ENCODE measurements at regions of chr11 and their contacts with region 1.

Region 1: GRCh38 chr11:65219930-65220213 is 38.1 kb downstream of the CAPN1 start:
- DNase-seq: no peak
- H3K4me3 ChIP-seq: no peak overlapping the region
- H3K27ac ChIP-seq: no peak overlapping the region
- H3K4me1 ChIP-seq: peaks cover 0 to 9% (median 6%) of the 10 kb centered on the region in 4 experiments; a peak in 6 of 7 replicates
- H3K27me3 ChIP-seq: no peaks in the 10 kb centered on the region
- CTCF ChIP-seq: no peak
- EP300 ChIP-seq: no peak
- POLR2A ChIP-seq: no peak
- RAD21 ChIP-seq: no peak

Region 2: DNA sequence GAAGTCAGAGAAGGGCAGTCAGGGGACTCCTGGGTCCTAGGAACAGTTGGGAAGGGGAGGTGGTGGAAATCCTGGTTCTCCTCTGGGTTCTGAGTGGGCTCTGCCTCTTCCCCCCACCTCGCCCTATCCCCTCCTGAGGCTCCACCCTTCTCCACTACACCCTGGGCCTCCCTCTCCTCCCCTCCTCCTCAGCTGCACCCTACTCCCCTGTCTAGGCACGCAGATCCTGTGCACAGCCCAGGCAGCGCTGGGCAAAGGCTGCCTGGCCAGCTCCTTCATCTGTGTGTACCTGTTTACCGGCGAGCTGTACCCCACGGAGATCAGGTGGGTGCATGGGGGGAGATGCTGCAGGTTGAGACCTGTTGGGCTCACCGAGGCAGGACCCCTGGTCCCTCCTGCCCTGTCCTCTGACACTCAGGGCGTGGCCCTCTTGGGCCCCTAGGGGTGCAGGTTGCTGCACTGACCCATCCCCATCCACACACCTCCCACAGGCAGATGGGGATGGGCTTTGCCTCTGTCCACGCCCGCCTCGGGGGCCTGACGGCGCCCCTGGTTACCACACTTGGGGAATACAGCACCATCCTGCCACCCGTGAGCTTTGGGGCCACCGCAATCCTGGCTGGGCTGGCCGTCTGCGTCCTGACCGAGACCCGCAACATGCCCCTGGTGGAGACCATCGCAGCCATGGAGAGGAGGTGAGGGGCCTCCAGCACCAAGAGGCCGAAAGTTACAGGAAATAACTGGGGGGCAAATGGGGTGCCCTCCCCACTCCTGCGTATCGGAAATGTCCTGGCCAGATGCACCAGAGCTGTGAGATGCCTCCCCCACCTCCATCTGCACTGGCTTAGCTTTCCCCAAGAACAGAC is 16.6 kb after region 1 on chr11:
- CTCF ChIA-PET with region 1: interaction called, 35 read pairs
- POLR2A ChIA-PET with region 1: interaction called, 324 read pairs
- DNase-seq: no peak
- H3K4me3 ChIP-seq: no peak overlapping the region
- H3K27ac ChIP-seq: no peak overlapping the region
- H3K4me1 ChIP-seq: no peaks in the 10 kb centered on the region
- H3K27me3 ChIP-seq: no peaks in the 10 kb centered on the region
- CTCF ChIP-seq: no peak
- EP300 ChIP-seq: no peak
- POLR2A ChIP-seq: no peak
- RAD21 ChIP-seq: no peak

Measured in H1 (cell line).